ENCODE measurements at regions of chr5 and their contacts with region 1.

Region 1: GRCh38 chr5:143195491-143195890 is 208.0 kb downstream of the NR3C1 start:
- DNase-seq: no peak
- H3K4me3 ChIP-seq: no peak overlapping the region
- H3K27ac ChIP-seq: no peak overlapping the region
- H3K4me1 ChIP-seq: no peaks in the 10 kb centered on the region
- H3K27me3 ChIP-seq: no peaks in the 10 kb centered on the region
- CTCF ChIP-seq: no peak
- POLR2A ChIP-seq: no peak

Region 2: DNA sequence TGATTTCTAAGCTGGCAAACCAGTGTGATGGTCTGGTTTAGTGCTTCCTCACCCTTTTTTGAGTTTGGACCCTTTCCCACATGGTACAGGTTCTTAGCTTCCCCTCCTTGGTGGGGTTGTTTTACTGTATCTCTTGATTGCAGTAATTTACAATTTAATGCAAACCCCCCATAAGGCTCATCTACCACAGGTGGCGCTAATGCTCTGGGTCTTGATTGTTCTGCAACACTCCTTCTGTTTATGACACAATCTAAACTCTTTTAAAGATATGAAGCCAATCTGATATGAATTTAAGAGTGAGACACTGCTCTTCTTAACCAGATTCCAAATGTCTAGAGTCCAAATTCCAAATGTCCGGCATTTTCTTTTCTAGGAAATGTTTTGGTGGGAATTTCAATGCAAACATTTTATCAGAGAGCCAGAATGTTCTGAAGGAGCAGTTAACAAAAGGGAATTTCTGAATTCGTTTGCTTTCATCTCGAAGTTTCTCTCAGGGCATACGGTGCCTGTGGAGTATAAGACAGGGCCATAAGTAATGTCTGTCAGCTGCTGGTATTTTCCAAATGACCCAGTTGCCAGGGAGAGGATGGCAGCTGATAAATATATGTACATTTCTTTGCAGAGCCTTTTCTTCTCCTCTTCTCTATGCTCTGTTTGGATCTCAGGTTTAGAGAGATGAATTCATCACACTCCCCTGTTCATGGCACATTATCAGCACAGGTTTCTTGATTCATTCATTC is 178.5 kb before region 1 on chr5:
- CTCF ChIA-PET with region 1: no interaction called
- POLR2A ChIA-PET with region 1: no interaction called
- dilution Hi-C with region 1: no loop called
- intact Hi-C with region 1: loop called (anchors 5 kb)
- DNase-seq: peak; percentile 67
- H3K4me3 ChIP-seq: no peak overlapping the region
- H3K27ac ChIP-seq: no peak overlapping the region
- H3K4me1 ChIP-seq: no peaks in the 10 kb centered on the region
- H3K27me3 ChIP-seq: no peaks in the 10 kb centered on the region
- CTCF ChIP-seq: peak; percentile 62 to 63
- POLR2A ChIP-seq: no peak

Measured in endothelial cell of umbilical vein (primary cell).